Endothelial cell of umbilical vein (primary cell): ENCODE measurements at regions of chr16 and their contacts with region 1.

Region 1: DNA sequence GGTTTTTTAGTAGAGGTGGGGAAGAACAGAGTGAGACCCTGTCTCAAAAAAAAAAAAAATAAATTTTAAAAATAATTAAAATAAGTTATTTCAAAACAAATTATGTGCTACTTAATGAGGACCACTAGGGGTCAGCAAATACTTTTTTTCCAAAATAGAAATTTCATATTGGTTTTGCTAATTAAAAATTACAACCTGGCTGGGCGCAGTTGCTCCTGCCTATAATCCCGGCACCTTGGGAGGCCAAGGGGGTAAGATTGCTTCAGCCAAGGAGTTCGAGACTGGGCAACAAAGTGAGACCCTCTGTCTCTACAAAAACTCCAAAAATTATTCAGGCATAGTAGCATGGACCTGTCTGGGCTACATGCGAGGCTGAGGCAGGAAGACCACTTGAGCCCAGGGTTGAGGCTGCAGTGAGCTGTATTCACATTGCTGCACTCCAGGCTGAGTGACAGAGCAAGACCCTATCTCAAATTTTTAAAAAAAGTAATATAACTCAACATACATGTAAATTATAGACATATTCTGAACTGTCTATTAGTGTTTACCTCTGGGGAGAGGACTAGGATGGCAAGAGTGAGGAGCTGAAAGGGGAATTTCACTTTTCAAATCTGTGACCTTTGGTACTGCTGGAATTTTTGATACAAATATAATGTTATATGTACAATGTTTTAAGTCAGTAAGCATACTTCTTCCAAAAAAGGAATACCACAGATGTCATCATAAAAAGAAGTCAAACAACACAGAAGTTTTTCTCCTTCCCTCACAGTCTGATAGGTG is 8.1 kb downstream of the MEIOB start:
- DNase-seq: peak; percentile 51
- H3K4me3 ChIP-seq: no peak overlapping the region
- H3K27ac ChIP-seq: no peak overlapping the region
- H3K4me1 ChIP-seq: no peaks in the 10 kb centered on the region
- H3K27me3 ChIP-seq: peaks cover 15 to 27% of the 10 kb centered on the region in 2 experiments
- CTCF ChIP-seq: peak; percentile 30 to 32
- POLR2A ChIP-seq: no peak

Region 2: GRCh38 chr16:1929578-1930337 is 65.9 kb after region 1 on chr16:
- CTCF ChIA-PET with region 1: interaction called, 12 read pairs
- POLR2A ChIA-PET with region 1: no interaction called
- dilution Hi-C with region 1: no loop called
- intact Hi-C with region 1: loop called (anchors 1 kb)
- DNase-seq: peak; percentile 79
- H3K4me3 ChIP-seq: peak overlapping the region in 2 of 3 experiments; percentile 50 to 53
- H3K27ac ChIP-seq: no peak overlapping the region
- H3K4me1 ChIP-seq: no peaks in the 10 kb centered on the region
- H3K27me3 ChIP-seq: no peaks in the 10 kb centered on the region
- CTCF ChIP-seq: peak; percentile 80 to 98
- POLR2A ChIP-seq: no peak

Region 3: GRCh38 chr16:2147981-2148671 is 284.3 kb after region 1 on chr16 and contains the start of gene RAB26:
- CTCF ChIA-PET with region 1: no interaction called
- POLR2A ChIA-PET with region 1: no interaction called
- dilution Hi-C with region 1: no loop called
- intact Hi-C with region 1: loop called (anchors 5 kb)
- DNase-seq: peak; percentile 46
- H3K4me3 ChIP-seq: peak within 1 kb of the TSS; percentile 10 to 32 (median 13)
- H3K27ac ChIP-seq: no peak within 1 kb of the TSS
- H3K4me1 ChIP-seq: peaks cover 23% of the 10 kb centered on the region
- H3K27me3 ChIP-seq: no peaks in the 10 kb centered on the region
- CTCF ChIP-seq: no peak
- POLR2A ChIP-seq: no peak
- total RNA-seq, gene RAB26: 0.91 and 1.6 TPM in 2 replicates